Activated B cell treated with CpG ODN at 0.5 μM for 24 hours (primary cell): ENCODE measurements at regions of chr1 and their contacts with region 1.

Region 1: GRCh38 chr1:44730741-44731512 is at the start of gene RNU5D-1:
- DNase-seq: peak; percentile 84
- ATAC-seq: peak; percentile 71
- H3K4me3 Mint-ChIP-seq: peak within 1 kb of the TSS; percentile 78
- H3K27ac Mint-ChIP-seq: peak within 1 kb of the TSS; percentile 100
- H3K4me1 Mint-ChIP-seq: peaks cover 37% of the 10 kb centered on the region
- H3K27me3 Mint-ChIP-seq: no peaks in the 10 kb centered on the region
- CTCF ChIP-seq: peak; percentile 39
- total RNA-seq, gene RNU5D-1: not detected in 2 replicates

Region 2: DNA sequence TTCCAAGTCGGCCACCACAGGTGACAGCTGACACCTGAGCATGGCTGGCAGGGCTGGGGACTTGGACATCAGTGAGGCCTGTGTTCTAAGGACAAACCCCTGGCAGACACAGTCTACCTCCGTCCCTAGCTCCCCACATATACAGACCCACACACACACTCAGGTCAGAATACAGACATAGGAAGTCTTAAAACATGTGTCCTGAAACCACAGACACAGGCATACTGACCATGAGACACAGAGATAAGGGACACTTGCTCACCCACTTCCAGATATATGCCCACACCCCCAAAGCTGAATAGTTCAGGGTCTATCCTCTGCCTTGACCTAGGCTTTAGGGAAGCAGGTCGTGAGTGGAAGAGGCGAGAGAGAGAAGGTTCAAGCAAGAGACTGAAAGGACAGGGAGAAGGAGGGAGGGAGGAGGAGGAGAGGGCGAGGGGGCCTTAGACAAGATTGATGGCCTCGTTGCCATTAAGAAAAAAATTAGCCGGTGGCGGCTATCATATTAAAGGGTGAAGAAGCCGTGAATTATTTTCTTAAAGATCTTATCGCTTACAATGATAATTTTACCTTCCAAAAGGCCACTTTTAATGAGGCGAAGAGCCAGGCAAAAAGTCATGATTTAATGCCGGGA is 106.5 kb before region 1 on chr1:
- CTCF ChIA-PET with region 1: no interaction called
- POLR2A ChIA-PET with region 1: no interaction called
- intact Hi-C with region 1: no loop called
- DNase-seq: no peak
- ATAC-seq: no peak
- H3K4me3 Mint-ChIP-seq: no peak overlapping the region
- H3K27ac Mint-ChIP-seq: no peak overlapping the region
- H3K4me1 Mint-ChIP-seq: no peaks in the 10 kb centered on the region
- H3K27me3 Mint-ChIP-seq: no peaks in the 10 kb centered on the region
- CTCF ChIP-seq: no peak

Region 3: DNA sequence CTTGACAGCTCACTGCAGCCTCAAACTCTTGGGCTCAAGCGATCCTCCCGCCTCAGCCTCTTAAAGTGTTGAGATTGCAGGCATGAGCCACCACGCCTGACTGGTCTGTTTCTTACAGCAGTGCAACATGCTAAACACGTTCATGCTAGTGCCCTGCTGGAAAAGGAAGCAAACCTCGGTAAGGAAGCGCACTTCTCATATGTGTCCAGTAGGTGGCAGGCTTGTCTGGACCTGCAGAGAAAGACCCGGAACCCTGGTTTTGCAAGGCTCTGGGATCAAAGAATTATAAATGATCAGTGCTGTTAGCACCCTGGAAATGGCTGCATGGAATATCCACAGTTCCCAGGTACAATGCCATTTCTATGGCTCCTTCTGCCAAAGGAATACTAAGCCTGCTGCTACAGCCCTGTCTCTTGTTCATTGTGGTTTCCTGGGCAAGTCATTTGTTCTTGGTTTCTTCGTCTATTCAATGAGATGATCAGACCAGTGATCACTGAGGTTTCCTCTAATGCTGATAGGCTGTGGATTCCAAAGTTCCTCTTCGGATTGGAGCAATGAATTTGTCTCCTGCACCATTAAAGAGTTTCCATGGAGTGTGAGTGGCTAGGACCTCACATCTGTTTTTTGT is 15.9 kb before region 1 on chr1:
- CTCF ChIA-PET with region 1: interaction called, 54 read pairs
- POLR2A ChIA-PET with region 1: interaction called, 181 read pairs
- intact Hi-C with region 1: loop called (anchors 1 kb)
- DNase-seq: no peak
- ATAC-seq: peak; percentile 78
- H3K4me3 Mint-ChIP-seq: peak overlapping the region; percentile 58
- H3K27ac Mint-ChIP-seq: peak overlapping the region; percentile 89
- H3K4me1 Mint-ChIP-seq: peaks cover 75% of the 10 kb centered on the region
- H3K27me3 Mint-ChIP-seq: no peaks in the 10 kb centered on the region
- CTCF ChIP-seq: peak; percentile 72

Region 4: GRCh38 chr1:44786138-44786840 is 55.4 kb after region 1 on chr1:
- CTCF ChIA-PET with region 1: interaction called, 13 read pairs
- POLR2A ChIA-PET with region 1: interaction called, 62 read pairs
- intact Hi-C with region 1: loop called (anchors 2 kb)
- DNase-seq: peak; percentile 81
- ATAC-seq: peak; percentile 79
- H3K4me3 Mint-ChIP-seq: peak overlapping the region; percentile 75
- H3K27ac Mint-ChIP-seq: peak overlapping the region; percentile 86
- H3K4me1 Mint-ChIP-seq: peaks cover 32% of the 10 kb centered on the region
- H3K27me3 Mint-ChIP-seq: no peaks in the 10 kb centered on the region
- CTCF ChIP-seq: peak; percentile 100

Region 5: GRCh38 chr1:44799770-44800584 is 69.0 kb after region 1 on chr1 and contains the start of gene PLK3:
- CTCF ChIA-PET with region 1: interaction called, 8 read pairs
- POLR2A ChIA-PET with region 1: interaction called, 61 read pairs
- intact Hi-C with region 1: loop called (anchors 1 kb)
- DNase-seq: peak; percentile 94
- ATAC-seq: peak; percentile 88
- H3K4me3 Mint-ChIP-seq: peak within 1 kb of the TSS; percentile 97
- H3K27ac Mint-ChIP-seq: peak within 1 kb of the TSS; percentile 100
- H3K4me1 Mint-ChIP-seq: peaks cover 33% of the 10 kb centered on the region
- H3K27me3 Mint-ChIP-seq: no peaks in the 10 kb centered on the region
- CTCF ChIP-seq: peak; percentile 30
- total RNA-seq, gene PLK3: 63.0 and 82.0 TPM in 2 replicates

Region 6: DNA sequence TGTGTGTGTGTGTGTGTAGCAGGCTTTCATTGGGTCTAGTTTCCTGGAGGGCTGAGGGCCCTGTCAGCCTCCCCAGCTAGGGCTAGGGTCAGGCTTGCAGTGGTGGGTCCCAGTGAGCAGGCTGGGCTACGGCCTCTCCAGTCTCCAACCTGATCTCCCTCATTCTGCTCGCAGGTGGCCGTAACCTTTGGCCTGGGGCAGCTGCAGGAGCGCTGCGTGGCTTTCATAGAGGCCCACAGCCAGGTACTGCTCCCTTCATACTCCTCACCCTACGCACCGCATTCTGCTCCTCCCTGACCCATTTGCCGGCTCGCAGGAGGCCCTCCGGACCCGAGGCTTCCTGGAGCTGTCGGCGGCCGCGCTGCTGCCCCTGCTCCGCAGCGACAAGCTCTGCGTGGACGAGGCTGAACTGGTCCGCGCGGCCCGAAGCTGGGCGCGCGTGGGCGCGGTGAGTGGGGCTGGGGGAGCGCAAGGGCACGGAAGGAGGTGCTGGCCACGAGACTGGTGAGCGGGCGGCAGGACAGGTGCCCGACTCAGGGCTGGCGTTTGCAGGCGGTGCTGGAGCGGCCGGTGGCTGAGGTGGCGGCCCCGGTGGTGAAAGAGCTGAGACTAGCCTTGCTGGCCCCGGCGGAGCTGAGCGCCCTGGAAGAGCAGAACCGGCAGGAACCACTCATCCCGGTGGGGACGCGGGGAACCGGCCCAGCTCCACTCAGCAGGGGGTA is 82.1 kb after region 1 on chr1:
- CTCF ChIA-PET with region 1: interaction called, 6 read pairs
- POLR2A ChIA-PET with region 1: interaction called, 232 read pairs
- intact Hi-C with region 1: no loop called
- DNase-seq: no peak
- ATAC-seq: no peak
- H3K4me3 Mint-ChIP-seq: peak overlapping the region; percentile 11
- H3K27ac Mint-ChIP-seq: peak overlapping the region; percentile 50
- H3K4me1 Mint-ChIP-seq: peaks cover 63% of the 10 kb centered on the region
- H3K27me3 Mint-ChIP-seq: no peaks in the 10 kb centered on the region
- CTCF ChIP-seq: no peak

Region 7: DNA sequence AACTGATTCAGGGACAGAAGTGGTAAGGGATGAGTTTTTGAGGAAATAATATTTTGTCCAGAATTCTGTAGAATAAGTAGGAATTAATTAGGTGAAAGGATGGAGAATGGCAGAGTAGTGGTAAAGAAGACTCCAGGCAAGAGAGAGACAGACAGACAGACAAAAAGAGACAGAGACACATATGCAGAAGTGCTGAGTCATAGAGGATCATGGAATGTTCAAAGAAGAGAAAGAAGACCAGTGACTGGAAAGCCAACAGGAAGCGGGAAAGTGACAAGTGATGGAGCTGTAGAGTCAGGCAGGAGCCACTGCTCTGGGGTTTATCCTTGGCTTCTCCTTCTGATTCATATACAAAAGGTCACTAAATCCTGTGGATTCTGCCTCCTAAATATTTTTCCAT is 367.0 kb after region 1 on chr1:
- CTCF ChIA-PET with region 1: no interaction called
- POLR2A ChIA-PET with region 1: no interaction called
- intact Hi-C with region 1: no loop called
- DNase-seq: no peak
- ATAC-seq: no peak
- H3K4me3 Mint-ChIP-seq: no peak overlapping the region
- H3K27ac Mint-ChIP-seq: no peak overlapping the region
- H3K4me1 Mint-ChIP-seq: no peaks in the 10 kb centered on the region
- H3K27me3 Mint-ChIP-seq: peaks cover 9% of the 10 kb centered on the region
- CTCF ChIP-seq: no peak